Activated T-helper 2 cell treated with anti-CD3 and anti-CD28 coated beads, Interferon-gamma antibody, Interleukin-2, Interleukin-4, amounts not matched to agents 10 μg/mL and 5 μg/mL and 100 μg/mL, durations not matched to agents 14 hours and 24 hours and 36 hours (primary cell): ENCODE measurements at regions of chr2 and their contacts with region 1.

Region 1: DNA sequence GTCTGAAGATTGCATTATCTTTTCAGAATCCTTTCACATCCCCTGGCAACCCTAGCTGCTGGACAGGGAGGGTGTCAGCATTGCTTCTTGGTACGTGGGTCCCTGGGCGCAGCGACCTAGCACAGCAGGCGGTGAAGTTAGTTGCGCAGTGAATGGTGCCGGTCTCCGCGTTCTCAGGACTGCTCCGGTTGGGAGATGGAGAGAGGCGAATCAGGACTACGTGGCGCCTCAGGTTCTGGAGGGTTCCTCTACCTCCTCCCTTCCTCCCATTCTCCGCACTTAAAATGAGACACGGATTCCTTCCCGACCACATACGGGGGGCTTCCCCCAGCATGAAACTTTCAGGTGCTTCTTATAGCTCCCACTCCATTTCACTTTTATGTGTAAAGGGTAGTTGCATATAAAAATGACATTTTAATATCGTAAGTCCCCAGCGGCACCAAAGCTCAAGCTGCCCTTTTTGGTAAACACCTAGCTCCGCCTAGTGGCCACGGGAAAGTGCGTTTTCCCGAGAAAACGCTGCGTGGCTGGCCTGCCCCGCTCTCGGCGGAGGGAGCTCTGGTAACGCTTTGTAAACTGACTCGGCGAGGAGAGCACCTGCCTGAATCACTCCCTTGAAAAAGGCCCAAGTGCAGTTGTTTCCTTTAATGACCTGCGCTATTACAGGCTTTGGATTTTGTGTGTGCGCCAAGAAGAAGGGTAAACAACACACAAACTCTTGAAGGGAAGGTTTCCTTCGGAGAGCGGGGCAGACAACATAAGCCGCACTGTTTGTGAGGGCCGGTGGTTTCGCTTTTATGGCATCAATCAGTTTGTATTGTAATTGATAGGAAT is 32.9 kb upstream of the INHBB start:
- DNase-seq: peak; percentile 69
- H3K4me3 Mint-ChIP-seq: peak overlapping the region; percentile 67
- H3K27ac Mint-ChIP-seq: peak overlapping the region; percentile 58
- H3K4me1 Mint-ChIP-seq: peaks cover 29% of the 10 kb centered on the region
- H3K27me3 Mint-ChIP-seq: no peaks in the 10 kb centered on the region

Region 2: DNA sequence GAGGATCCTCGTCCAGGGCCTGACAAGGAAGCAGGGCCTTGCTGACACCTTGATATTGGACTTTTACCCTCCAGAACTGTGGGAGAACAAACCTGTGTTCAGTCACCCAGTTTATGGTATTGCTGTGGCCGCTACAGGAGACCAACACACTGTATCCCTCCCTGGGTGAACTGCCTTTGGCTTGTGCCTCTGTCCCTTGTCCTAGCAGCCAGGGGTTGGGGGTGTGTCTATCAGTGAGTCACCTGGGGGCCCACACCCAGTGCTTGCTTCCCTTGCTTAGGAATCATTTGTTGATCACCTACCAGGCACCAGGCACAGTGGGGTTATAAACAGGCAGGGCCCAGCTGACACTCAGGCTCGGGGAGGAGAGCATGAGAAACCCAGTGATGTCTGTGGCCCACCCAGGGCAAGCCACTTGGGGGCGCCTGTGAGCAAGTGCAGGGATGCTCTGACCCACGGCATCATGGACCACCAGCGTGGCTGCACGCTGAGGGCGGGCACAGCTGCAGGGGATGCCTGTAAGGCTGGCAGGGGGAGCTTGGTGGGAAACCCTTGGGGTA is 107.0 kb before region 1 on chr2:
- intact Hi-C with region 1: loop called (anchors 1 kb)
- DNase-seq: no peak
- H3K4me3 Mint-ChIP-seq: no peak overlapping the region
- H3K27ac Mint-ChIP-seq: no peak overlapping the region
- H3K4me1 Mint-ChIP-seq: peaks cover 13% of the 10 kb centered on the region
- H3K27me3 Mint-ChIP-seq: no peaks in the 10 kb centered on the region